HepG2 (cell line): ENCODE measurements at regions of chr7 and their contacts with region 1.

Region 1: GRCh38 chr7:99210264-99210970 is 2.5 kb upstream of the KPNA7 start:
- DNase-seq: peak; percentile 88
- ATAC-seq: peak; percentile 8; the same call in 2 of the 3 replicates
- H3K4me3 ChIP-seq: peak overlapping the region in 1 of 3 experiments; percentile 10; a peak in 1 of 6 replicates
- H3K27ac ChIP-seq: peak overlapping the region; percentile 98
- H3K4me1 ChIP-seq: peaks cover 84% of the 10 kb centered on the region
- H3K27me3 ChIP-seq: no peaks in the 10 kb centered on the region
- CTCF ChIP-seq: no peak
- EP300 ChIP-seq: peak in 1 of 2 experiments; percentile 89; a peak in 2 of 4 replicates
- POLR2A ChIP-seq: no peak
- RAD21 ChIP-seq: no peak

Region 2: GRCh38 chr7:99040104-99040958 is 170.1 kb before region 1 on chr7:
- CTCF ChIA-PET with region 1: no interaction called
- POLR2A ChIA-PET with region 1: no interaction called
- in situ Hi-C with region 1: no loop called
- intact Hi-C with region 1: loop called (anchors 5 kb)
- DNase-seq: peak; percentile 79
- ATAC-seq: peak; percentile 88
- H3K4me3 ChIP-seq: no peak overlapping the region
- H3K27ac ChIP-seq: no peak overlapping the region
- H3K4me1 ChIP-seq: peaks cover 26% of the 10 kb centered on the region
- H3K27me3 ChIP-seq: no peaks in the 10 kb centered on the region
- CTCF ChIP-seq: peak; percentile 92
- EP300 ChIP-seq: no peak
- POLR2A ChIP-seq: no peak
- RAD21 ChIP-seq: peak; percentile 91

Region 3: GRCh38 chr7:99098824-99099498 is 111.5 kb before region 1 on chr7:
- CTCF ChIA-PET with region 1: no interaction called
- POLR2A ChIA-PET with region 1: interaction called, 31 read pairs
- in situ Hi-C with region 1: no loop called
- intact Hi-C with region 1: loop called (anchors 5 kb)
- DNase-seq: peak; percentile 96
- ATAC-seq: peak; percentile 87
- H3K4me3 ChIP-seq: peak overlapping the region; percentile 46 to 62 (median 53)
- H3K27ac ChIP-seq: peak overlapping the region; percentile 98
- H3K4me1 ChIP-seq: peaks cover 78% of the 10 kb centered on the region
- H3K27me3 ChIP-seq: no peaks in the 10 kb centered on the region
- CTCF ChIP-seq: no peak
- EP300 ChIP-seq: peak; percentile 48 to 84; a peak in 3 of 4 replicates
- POLR2A ChIP-seq: peak; percentile 54 to 82; a peak in 3 of 4 replicates
- RAD21 ChIP-seq: no peak

Region 4: GRCh38 chr7:99143853-99144672 is 66.4 kb before region 1 on chr7 and contains the start of gene SMURF1:
- CTCF ChIA-PET with region 1: no interaction called
- POLR2A ChIA-PET with region 1: interaction called, 14 read pairs
- in situ Hi-C with region 1: no loop called
- intact Hi-C with region 1: loop called (anchors 5 kb)
- DNase-seq: peak; percentile 23
- ATAC-seq: peak; percentile 55
- H3K4me3 ChIP-seq: peak within 1 kb of the TSS; percentile 74 to 97 (median 89)
- H3K27ac ChIP-seq: peak within 1 kb of the TSS; percentile 86
- H3K4me1 ChIP-seq: peaks cover 37% of the 10 kb centered on the region
- H3K27me3 ChIP-seq: no peaks in the 10 kb centered on the region; a peak in 1 of 5 replicates
- CTCF ChIP-seq: 0 out of 2 replicates have a peak, but pooled peaks have one; percentile 13
- EP300 ChIP-seq: no peak
- POLR2A ChIP-seq: peak; percentile 40 to 90
- RAD21 ChIP-seq: peak; percentile 32; the same call in 1 of the 2 replicates
- total RNA-seq, gene SMURF1: 11.1 and 12.0 TPM in 2 replicates

Region 5: DNA sequence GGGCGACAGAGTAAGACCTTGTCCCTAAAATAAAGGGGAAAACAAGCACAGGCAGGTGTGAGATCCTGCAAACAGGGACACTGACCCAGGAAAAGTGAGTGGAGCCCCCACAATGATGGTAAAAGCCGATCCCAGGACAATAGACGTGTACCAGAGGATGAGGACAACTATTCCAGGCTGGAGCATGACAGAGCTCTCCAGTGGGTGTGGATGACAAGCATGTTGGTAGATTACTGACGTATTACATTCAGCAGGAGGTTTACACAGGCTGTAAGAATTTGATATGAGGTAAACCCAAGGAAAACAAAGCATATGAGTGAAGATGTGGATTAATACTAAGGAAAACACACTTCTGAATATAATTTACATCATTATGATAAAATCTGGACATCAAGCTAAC is 38.7 kb before region 1 on chr7:
- CTCF ChIA-PET with region 1: no interaction called
- POLR2A ChIA-PET with region 1: interaction called, 6 read pairs
- in situ Hi-C with region 1: no loop called
- intact Hi-C with region 1: loop called (anchors 2 kb)
- DNase-seq: no peak
- ATAC-seq: no peak
- H3K4me3 ChIP-seq: no peak overlapping the region
- H3K27ac ChIP-seq: no peak overlapping the region
- H3K4me1 ChIP-seq: peaks cover 44% of the 10 kb centered on the region
- H3K27me3 ChIP-seq: no peaks in the 10 kb centered on the region
- CTCF ChIP-seq: no peak
- EP300 ChIP-seq: no peak
- POLR2A ChIP-seq: no peak
- RAD21 ChIP-seq: no peak

Region 6: DNA sequence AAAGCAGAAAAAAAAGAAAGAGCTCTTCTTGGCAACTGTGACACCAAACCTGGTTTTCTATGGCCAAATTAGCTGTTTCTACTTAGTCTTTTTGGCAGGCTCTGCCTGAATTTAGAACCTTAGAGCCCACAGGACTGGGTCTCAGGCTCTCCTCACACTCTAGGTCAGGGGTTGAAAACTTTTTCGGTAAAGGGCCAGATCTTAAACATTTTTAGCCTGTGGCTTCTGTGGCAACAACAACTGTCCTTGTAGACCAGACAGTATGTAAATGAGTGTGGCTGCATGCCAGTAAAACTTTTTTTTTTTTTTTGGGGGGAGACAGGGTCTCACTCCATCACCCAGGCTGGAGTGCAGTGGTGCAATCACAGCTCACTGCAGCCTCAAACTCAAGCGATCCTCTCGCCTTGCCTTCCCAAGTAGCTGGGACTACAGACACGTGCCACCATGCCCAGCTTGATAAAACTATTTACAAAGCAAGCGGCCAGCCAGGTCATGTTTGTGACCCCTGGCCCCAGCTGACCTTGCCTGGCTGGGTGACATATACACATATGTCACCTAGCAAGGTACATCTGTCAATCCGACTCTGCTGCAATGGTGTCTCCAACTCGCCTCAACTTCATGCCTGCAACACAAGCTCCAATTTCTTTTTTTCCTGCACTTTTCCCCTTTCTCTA is 19.9 kb before region 1 on chr7:
- CTCF ChIA-PET with region 1: no interaction called
- POLR2A ChIA-PET with region 1: interaction called, 27 read pairs
- in situ Hi-C with region 1: no loop called
- intact Hi-C with region 1: loop called (anchors 2 kb)
- DNase-seq: peak; percentile 71
- ATAC-seq: peak; percentile 86
- H3K4me3 ChIP-seq: no peak overlapping the region
- H3K27ac ChIP-seq: no peak overlapping the region
- H3K4me1 ChIP-seq: peaks cover 37% of the 10 kb centered on the region
- H3K27me3 ChIP-seq: no peaks in the 10 kb centered on the region
- CTCF ChIP-seq: no peak
- EP300 ChIP-seq: peak in 1 of 2 experiments; percentile 67; a peak in 2 of 4 replicates
- POLR2A ChIP-seq: no peak
- RAD21 ChIP-seq: no peak

Region 7: DNA sequence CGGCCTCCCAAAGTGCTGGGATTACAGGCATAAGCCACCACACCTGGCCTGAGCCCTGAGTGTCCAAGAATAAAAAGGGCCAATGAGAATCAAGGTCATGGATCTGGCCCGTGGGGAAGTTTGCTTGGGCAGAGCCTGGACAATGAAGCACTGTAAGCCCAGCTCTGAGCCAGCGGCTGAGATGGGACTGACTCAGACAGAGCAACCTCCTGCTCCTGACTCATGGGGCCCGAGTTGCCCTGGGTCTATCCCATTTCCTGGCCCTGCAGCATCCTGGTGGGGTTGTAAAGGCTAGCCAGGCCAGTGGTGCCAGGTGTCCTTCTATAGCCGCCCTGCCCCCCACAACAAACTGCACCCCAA is 57.0 kb after region 1 on chr7:
- CTCF ChIA-PET with region 1: no interaction called
- POLR2A ChIA-PET with region 1: interaction called, 3 read pairs
- in situ Hi-C with region 1: no loop called
- intact Hi-C with region 1: loop called (anchors 5 kb)
- DNase-seq: peak; percentile 85
- ATAC-seq: peak; percentile 97
- H3K4me3 ChIP-seq: peak overlapping the region in 1 of 3 experiments; percentile 19; a peak in 1 of 6 replicates
- H3K27ac ChIP-seq: no peak overlapping the region
- H3K4me1 ChIP-seq: peaks cover 30% of the 10 kb centered on the region
- H3K27me3 ChIP-seq: peaks cover 0 to 1% of the 10 kb centered on the region in 2 experiments; a peak in 1 of 5 replicates
- CTCF ChIP-seq: no peak
- EP300 ChIP-seq: peak in 1 of 2 experiments; percentile 16; a peak in 1 of 4 replicates
- POLR2A ChIP-seq: no peak
- RAD21 ChIP-seq: no peak

Region 8: GRCh38 chr7:99679400-99680191 is 469.2 kb after region 1 on chr7 and contains the start of gene CYP3A5:
- CTCF ChIA-PET with region 1: no interaction called
- POLR2A ChIA-PET with region 1: no interaction called
- in situ Hi-C with region 1: no loop called
- intact Hi-C with region 1: no loop called
- DNase-seq: no peak
- ATAC-seq: no peak; the same call in 2 of the 3 replicates
- H3K4me3 ChIP-seq: 0 out of 6 replicates have a peak within 1 kb of the TSS, but pooled peaks of 1 of the 3 experiments have one; percentile 17
- H3K27ac ChIP-seq: peak within 1 kb of the TSS; percentile 0
- H3K4me1 ChIP-seq: peaks cover 51% of the 10 kb centered on the region
- H3K27me3 ChIP-seq: no peaks in the 10 kb centered on the region
- CTCF ChIP-seq: no peak
- EP300 ChIP-seq: no peak
- POLR2A ChIP-seq: peak; percentile 33 to 34; a peak in 1 of 4 replicates
- RAD21 ChIP-seq: no peak
- total RNA-seq, gene CYP3A5: 1.7 and 5.7 TPM in 2 replicates